ENCODE measurements at regions of chr3 and their contacts with region 1.

Region 1: DNA sequence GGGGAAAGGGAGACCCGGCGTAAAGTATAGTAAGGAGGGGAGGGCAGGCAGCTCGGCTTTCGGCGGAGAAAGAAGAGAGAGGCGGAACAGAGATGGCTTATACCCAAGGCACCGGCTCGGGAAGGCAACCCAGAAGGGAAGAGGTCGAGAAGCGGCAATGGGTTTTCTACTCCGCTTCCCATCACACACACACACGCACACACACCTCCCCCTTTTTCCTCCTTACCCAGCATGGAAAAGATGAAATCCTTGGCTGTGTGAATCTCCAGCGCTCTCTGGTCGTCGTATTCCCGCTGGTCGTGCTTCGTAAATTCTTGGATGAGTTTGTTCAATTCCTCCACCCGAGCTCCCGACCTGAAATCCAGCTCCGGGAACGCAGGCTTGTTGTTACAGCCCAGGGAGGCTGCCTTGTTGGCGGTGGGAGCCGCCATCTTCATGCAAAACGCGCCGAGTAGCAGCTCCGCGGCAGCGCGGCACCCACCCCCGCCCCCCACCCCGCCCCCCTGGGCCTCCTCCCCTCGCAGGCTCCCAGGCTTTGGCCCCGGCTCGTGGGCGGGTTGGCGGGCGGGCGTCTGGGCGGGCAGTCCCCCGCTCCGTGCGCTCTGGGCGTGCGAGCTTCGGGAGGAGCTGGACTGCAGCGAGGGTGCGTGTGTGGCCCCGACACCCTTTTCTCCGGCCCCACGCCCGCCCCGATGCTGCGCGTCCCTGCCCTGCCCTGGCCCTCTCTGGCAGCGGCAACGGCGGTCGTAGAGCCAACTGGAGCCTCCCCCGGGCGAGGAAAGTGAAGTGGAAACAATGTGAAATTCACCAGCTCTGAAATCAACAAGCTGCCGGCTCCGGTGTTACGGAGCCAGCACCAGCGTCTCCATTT is at the start of gene MB21D2:
- DNase-seq: peak; percentile 80
- ATAC-seq: peak; percentile 90
- H3K4me3 ChIP-seq: peak within 1 kb of the TSS; percentile 79
- H3K27ac ChIP-seq: peak within 1 kb of the TSS; percentile 91
- H3K4me1 ChIP-seq: peaks cover 5% of the 10 kb centered on the region
- H3K27me3 ChIP-seq: no peaks in the 10 kb centered on the region
- CTCF ChIP-seq: no peak
- POLR2A ChIP-seq: peak; percentile 90
- RAD21 ChIP-seq: no peak; the same call in none of the 2 replicates
- total RNA-seq, gene MB21D2: 44.8 and 46.4 TPM in 2 replicates

Region 2: GRCh38 chr3:192831111-192831644 is 86.5 kb before region 1 on chr3:
- CTCF ChIA-PET with region 1: interaction called, 4 read pairs
- POLR2A ChIA-PET with region 1: no interaction called
- dilution Hi-C with region 1: no loop called
- in situ Hi-C with region 1: no loop called
- intact Hi-C with region 1: loop called (anchors 2 kb)
- DNase-seq: peak; percentile 98
- ATAC-seq: peak; percentile 80
- H3K4me3 ChIP-seq: no peak overlapping the region
- H3K27ac ChIP-seq: peak overlapping the region; percentile 46
- H3K4me1 ChIP-seq: peaks cover 29% of the 10 kb centered on the region
- H3K27me3 ChIP-seq: no peaks in the 10 kb centered on the region
- CTCF ChIP-seq: no peak
- POLR2A ChIP-seq: no peak
- RAD21 ChIP-seq: 0 out of 2 replicates have a peak, but pooled peaks have one; percentile 10

Region 3: GRCh38 chr3:192879336-192880106 is 38.1 kb before region 1 on chr3:
- CTCF ChIA-PET with region 1: interaction called, 3 read pairs
- POLR2A ChIA-PET with region 1: no interaction called
- dilution Hi-C with region 1: no loop called
- in situ Hi-C with region 1: no loop called
- intact Hi-C with region 1: loop called (anchors 2 kb)
- DNase-seq: peak; percentile 96
- ATAC-seq: peak; percentile 82
- H3K4me3 ChIP-seq: no peak overlapping the region
- H3K27ac ChIP-seq: peak overlapping the region; percentile 49
- H3K4me1 ChIP-seq: peaks cover 14% of the 10 kb centered on the region
- H3K27me3 ChIP-seq: no peaks in the 10 kb centered on the region
- CTCF ChIP-seq: no peak
- POLR2A ChIP-seq: no peak
- RAD21 ChIP-seq: no peak

Region 4: DNA sequence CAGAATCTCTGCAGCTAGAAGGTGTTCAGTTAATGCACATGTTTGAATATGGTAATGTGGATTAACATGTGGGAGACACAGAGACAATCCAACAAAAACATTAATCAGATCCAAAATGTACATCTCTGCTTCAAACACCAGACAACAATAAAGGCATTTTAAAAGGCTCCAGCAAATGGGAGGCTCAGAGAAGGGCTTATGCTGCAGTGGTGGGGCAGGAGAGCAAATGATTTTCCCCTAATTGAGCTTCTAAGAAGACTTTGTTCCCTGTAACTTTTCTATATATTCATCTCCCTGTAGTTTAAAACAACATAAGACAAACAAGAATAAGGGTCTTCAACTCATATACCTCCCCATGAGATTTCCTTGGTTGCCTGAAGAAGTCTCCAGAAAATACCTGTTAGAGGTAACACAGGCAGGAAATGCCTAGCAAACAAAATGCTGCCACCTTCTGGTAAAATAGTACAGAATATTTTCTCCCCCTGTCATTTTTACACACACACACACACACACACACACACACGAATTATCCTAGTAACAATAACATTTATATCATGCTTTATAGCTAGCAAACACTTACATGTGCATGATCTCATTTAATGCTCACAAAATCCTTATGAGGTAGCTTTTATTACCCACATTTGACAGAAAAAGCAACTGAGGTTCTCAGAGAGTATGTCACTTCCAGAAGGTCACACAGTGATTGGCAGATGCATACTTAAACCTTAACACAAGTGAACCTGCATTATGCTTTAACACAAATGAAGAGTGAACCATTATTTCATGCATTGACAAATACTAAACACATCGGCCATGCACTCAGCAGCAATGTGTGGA is 123.4 kb after region 1 on chr3:
- CTCF ChIA-PET with region 1: interaction called, 27 read pairs
- POLR2A ChIA-PET with region 1: no interaction called
- dilution Hi-C with region 1: no loop called
- in situ Hi-C with region 1: no loop called
- intact Hi-C with region 1: loop called (anchors 1 kb)
- DNase-seq: peak; percentile 60
- ATAC-seq: peak; percentile 56; the same call in 1 of the 2 replicates
- H3K4me3 ChIP-seq: no peak overlapping the region
- H3K27ac ChIP-seq: no peak overlapping the region
- H3K4me1 ChIP-seq: no peaks in the 10 kb centered on the region
- H3K27me3 ChIP-seq: no peaks in the 10 kb centered on the region; the same call in 1 of the 2 replicates
- CTCF ChIP-seq: peak; percentile 65
- POLR2A ChIP-seq: no peak
- RAD21 ChIP-seq: peak; percentile 77